ENCODE measurements at regions of chr9 and their contacts with region 1.

Region 1: DNA sequence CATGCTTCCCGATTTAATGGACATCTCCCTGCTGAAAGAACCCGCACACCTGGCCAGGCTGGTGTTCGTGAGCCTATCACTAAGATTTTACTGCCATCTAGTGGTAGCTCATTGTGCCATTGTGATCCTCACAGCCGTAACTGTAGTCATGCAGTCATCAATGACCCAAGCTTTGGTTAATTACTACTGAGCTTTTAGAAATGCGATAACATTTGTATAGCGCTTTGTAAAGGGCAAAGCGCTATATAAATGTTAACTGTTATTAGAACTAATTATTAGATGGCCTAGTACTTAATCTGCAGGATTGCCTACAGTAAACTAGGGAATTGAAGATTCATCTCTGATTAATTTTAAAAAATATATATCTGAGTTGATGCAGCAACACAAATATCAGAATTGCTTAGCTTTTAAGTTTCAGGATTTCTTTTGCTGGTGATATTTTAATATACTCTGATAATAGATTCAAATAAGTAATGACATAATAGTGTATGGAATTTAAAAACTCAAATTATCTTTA is 90.2 kb downstream of the HACD4 start:
- DNase-seq: peak; percentile 63
- ATAC-seq: peak; percentile 99
- H3K4me3 Mint-ChIP-seq: no peak overlapping the region
- H3K27ac Mint-ChIP-seq: no peak overlapping the region
- H3K4me1 Mint-ChIP-seq: peaks cover 3% of the 10 kb centered on the region
- H3K27me3 Mint-ChIP-seq: no peaks in the 10 kb centered on the region

Region 2: GRCh38 chr9:20622330-20623020 is 318.8 kb before region 1 on chr9 and contains the start of gene MLLT3:
- CTCF ChIA-PET with region 1: interaction called, 52 read pairs
- DNase-seq: peak; percentile 98
- ATAC-seq: peak; percentile 86
- H3K4me3 Mint-ChIP-seq: peak within 1 kb of the TSS; percentile 100
- H3K27ac Mint-ChIP-seq: peak within 1 kb of the TSS; percentile 94
- H3K4me1 Mint-ChIP-seq: peaks cover 37% of the 10 kb centered on the region
- H3K27me3 Mint-ChIP-seq: no peaks in the 10 kb centered on the region
- total RNA-seq, gene MLLT3: 55.9 to 56.4 TPM

Region 3: GRCh38 chr9:20884985-20885593 is 56.1 kb before region 1 on chr9:
- CTCF ChIA-PET with region 1: interaction called, 15 read pairs
- DNase-seq: peak; percentile 73
- ATAC-seq: peak; percentile 66
- H3K4me3 Mint-ChIP-seq: no peak overlapping the region
- H3K27ac Mint-ChIP-seq: no peak overlapping the region
- H3K4me1 Mint-ChIP-seq: no peaks in the 10 kb centered on the region
- H3K27me3 Mint-ChIP-seq: no peaks in the 10 kb centered on the region

Region 4: GRCh38 chr9:20929276-20929675 is 12.0 kb before region 1 on chr9:
- CTCF ChIA-PET with region 1: interaction called, 14 read pairs
- DNase-seq: no peak
- ATAC-seq: no peak
- H3K4me3 Mint-ChIP-seq: no peak overlapping the region
- H3K27ac Mint-ChIP-seq: no peak overlapping the region
- H3K4me1 Mint-ChIP-seq: peaks cover 30% of the 10 kb centered on the region
- H3K27me3 Mint-ChIP-seq: no peaks in the 10 kb centered on the region

Region 5: DNA sequence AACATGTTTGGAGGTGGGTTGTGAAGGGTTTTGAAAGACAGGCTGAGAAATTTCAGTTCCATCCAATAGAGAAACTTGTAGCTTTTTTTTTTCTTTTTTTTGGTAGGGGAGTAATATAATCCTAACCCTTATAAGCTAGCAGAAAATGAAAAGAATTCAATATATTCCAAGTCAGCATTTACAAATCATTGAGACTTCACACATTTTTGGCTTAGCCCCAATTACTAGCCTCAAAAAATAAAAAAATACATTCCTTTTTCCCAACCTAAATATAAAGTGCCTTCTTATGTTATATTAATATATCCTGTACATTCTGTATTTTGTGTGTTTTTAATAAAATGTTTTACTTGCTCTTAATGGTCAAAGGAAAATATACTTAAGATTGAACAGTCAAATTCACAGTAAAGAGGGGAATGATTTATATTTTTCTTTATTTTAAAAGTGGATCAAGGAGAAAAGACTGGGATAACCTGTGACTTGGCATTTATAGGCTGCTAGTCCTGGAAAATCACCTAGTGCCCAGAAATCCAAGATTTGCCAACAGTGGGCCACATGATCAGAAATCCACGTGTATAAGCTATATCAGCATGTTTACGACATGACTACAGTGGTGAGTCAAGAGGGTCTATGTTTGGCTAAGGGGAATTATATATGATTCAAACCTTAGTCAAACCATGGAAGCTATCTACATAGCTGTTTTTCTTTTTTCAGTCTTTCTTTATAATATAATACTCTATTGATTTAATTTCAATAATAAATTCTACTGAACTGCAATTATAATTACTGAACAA is 75.7 kb after region 1 on chr9:
- CTCF ChIA-PET with region 1: no interaction called
- DNase-seq: no peak
- ATAC-seq: no peak
- H3K4me3 Mint-ChIP-seq: no peak overlapping the region
- H3K27ac Mint-ChIP-seq: no peak overlapping the region
- H3K4me1 Mint-ChIP-seq: no peaks in the 10 kb centered on the region
- H3K27me3 Mint-ChIP-seq: no peaks in the 10 kb centered on the region

Region 6: DNA sequence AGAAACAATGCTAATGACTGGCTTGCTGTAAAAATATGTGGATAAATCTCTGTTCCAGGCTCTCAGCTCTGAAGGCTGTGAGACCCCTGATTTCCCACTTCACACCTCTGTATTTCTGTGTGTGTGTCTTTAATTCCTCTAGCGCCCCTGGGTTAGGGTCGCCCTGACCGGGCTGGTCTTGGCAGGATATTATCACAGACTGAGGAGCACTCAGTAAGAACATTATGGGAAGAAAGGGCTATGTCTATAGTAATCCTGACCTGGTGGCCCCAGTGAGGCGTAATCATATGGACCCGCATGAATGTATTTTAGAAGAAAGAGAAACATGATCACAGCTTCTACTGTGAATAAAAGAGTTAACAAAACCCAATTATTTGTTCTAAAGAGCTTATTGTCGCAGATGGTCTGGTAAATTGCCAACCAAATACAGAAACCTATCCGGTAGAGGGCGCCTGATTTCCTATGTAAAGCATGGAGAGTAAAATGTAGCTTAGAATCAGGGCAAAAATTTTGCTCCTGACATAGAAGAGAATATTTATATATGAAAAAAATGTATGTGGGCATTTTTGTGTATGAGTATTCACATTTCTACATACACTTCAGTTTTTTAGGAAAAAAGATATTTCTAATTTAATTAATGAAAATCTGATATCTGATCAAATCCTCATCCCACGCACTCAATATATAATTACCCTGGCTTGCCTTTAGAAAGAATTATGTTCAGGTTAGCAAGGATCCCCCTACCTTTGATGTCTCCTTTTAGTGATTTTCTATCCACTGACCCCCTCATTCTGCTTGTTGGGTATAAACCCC is 493.2 kb after region 1 on chr9:
- CTCF ChIA-PET with region 1: no interaction called
- DNase-seq: no peak
- ATAC-seq: no peak
- H3K4me3 Mint-ChIP-seq: no peak overlapping the region
- H3K27ac Mint-ChIP-seq: no peak overlapping the region
- H3K4me1 Mint-ChIP-seq: peaks cover 2% of the 10 kb centered on the region
- H3K27me3 Mint-ChIP-seq: peaks cover 34% of the 10 kb centered on the region

Measured in activated CD8-positive, alpha-beta memory T cell treated with anti-CD3 and anti-CD28 coated beads, Interleukin-2, amount 10 ng/mL, durations not matched to agents 7 days and 5 days (primary cell).